ENCODE measurements at regions of chr9 and their contacts with region 1.

Region 1: GRCh38 chr9:130313103-130313858 is 47.7 kb downstream of the HMCN2 start:
- DNase-seq: no peak
- ATAC-seq: no peak
- H3K4me3 Mint-ChIP-seq: no peak overlapping the region
- H3K27ac Mint-ChIP-seq: no peak overlapping the region
- H3K4me1 Mint-ChIP-seq: peaks cover 17% of the 10 kb centered on the region
- H3K27me3 Mint-ChIP-seq: no peaks in the 10 kb centered on the region
- CTCF ChIP-seq: no peak

Region 2: GRCh38 chr9:130265431-130266235 is 47.6 kb before region 1 on chr9 and contains the start of gene HMCN2:
- CTCF ChIA-PET with region 1: interaction called, 13 read pairs
- POLR2A ChIA-PET with region 1: interaction called, 3 read pairs
- DNase-seq: peak; percentile 70
- ATAC-seq: peak; percentile 74
- H3K4me3 Mint-ChIP-seq: peak within 1 kb of the TSS; percentile 75
- H3K27ac Mint-ChIP-seq: no peak within 1 kb of the TSS
- H3K4me1 Mint-ChIP-seq: peaks cover 49% of the 10 kb centered on the region
- H3K27me3 Mint-ChIP-seq: peaks cover 34% of the 10 kb centered on the region
- CTCF ChIP-seq: no peak
- total RNA-seq, gene HMCN2: 5.6 to 12.4 TPM (median 10.8 TPM) in 3 replicates

Region 3: DNA sequence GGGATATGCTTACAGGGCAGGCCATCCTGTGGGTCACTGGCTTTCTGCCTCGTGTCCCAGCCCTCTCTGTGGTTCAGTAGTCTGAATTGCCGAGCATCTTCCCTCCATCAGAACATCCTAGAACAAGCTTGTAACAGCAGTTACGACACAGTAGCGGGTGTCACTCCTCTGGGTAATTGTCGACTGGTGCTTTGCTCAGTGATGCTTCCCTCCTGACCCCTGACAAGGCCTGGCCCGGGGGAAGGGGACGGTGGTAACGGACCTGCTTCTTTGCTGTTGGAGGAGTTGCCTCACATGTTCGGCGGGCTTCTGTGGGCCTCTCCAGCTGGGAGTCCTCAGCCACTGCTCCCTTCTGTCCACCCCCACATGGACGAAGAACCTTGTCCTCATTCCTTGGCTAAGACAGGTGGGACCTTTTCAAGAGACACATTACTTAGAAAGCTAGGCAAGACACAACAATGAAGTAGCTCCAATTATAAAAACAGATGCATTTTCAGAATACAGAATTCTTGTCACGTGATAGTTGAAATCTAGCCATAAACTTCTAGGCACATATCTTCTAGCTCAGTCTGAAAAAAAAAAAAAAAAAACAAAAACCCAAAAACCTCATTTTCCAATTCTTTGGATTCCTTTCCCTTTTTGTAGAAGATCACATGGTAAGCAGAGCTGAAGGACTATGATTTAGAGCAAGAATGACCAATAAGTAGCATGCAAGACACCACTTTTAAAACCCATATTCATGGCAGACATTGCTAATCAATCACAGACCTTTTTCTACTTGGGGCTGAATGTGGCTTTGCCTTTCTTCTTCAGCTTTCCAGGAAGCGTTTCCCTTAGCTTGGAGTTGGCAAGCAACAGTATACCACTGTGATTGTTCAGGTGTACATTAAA is 22.7 kb before region 1 on chr9:
- CTCF ChIA-PET with region 1: interaction called, 12 read pairs
- POLR2A ChIA-PET with region 1: interaction called, 3 read pairs
- DNase-seq: no peak
- ATAC-seq: no peak
- H3K4me3 Mint-ChIP-seq: no peak overlapping the region
- H3K27ac Mint-ChIP-seq: peak overlapping the region; percentile 51; the same call in 1 of the 2 replicates
- H3K4me1 Mint-ChIP-seq: peaks cover 9% of the 10 kb centered on the region
- H3K27me3 Mint-ChIP-seq: no peaks in the 10 kb centered on the region
- CTCF ChIP-seq: no peak

Region 4: DNA sequence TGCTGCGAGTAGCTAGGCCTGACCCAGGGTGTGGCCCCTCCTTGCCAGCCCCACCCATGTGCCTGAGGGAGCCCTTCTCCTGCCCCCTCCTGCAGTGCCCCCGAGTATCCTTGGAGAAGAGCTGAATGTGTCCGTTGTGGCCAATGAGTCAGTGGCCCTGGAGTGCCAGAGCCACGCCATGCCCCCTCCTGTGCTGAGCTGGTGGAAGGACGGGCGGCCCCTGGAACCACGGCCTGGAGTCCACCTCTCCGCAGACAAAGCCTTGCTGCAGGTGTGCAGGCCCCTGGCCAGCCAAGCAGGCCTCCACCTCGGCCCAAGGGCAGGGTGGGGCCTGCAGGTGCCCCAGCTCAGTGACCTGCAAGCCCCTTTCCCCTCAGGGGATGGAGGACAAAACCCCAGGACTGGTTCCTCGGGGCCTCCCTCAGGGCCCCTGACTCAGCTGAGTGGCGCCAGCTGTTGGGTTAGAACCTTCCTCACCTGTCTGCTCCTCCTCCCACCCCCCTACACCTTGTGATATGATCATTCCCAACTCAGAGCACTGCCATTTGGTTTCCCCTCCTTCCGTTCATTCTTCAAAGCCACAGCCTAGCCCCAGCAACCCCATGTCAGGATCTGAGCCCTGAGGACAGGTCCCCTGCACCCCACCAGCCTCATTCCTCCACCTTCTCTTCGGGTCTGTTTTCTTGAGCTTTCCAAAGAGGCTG is 51.5 kb after region 1 on chr9:
- CTCF ChIA-PET with region 1: no interaction called
- POLR2A ChIA-PET with region 1: no interaction called
- DNase-seq: no peak
- ATAC-seq: no peak
- H3K4me3 Mint-ChIP-seq: no peak overlapping the region
- H3K27ac Mint-ChIP-seq: no peak overlapping the region
- H3K4me1 Mint-ChIP-seq: peaks cover 6% of the 10 kb centered on the region
- H3K27me3 Mint-ChIP-seq: no peaks in the 10 kb centered on the region
- CTCF ChIP-seq: no peak